ENCODE measurements at regions of chr11 and their contacts with region 1.

Region 1: DNA sequence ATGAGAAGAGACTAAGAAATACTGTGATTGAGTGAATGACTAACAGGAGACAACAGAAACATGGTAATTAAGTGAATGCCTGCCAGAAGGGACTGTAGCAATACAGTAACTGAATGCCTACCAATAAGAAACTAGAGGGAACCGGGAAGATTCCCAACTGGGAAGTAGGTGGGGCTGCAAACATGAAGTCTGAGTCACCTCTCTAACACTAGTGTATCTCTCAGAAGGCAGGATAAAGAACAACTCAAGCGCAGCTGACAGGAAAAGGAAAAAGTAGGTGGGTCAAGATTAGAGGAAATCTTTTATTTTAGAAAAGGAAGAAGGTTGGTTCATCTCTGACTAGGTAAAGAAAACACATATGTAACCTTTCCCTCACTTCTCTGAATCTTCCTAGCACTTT is 14.0 kb downstream of the C11orf42 start:
- DNase-seq: peak; percentile 95
- H3K4me3 Mint-ChIP-seq: no peak overlapping the region
- H3K27ac Mint-ChIP-seq: peak overlapping the region; percentile 57
- H3K4me1 Mint-ChIP-seq: peaks cover 13% of the 10 kb centered on the region
- H3K27me3 Mint-ChIP-seq: no peaks in the 10 kb centered on the region
- CTCF ChIP-seq: no peak

Region 2: GRCh38 chr11:6234387-6235107 is 15.2 kb after region 1 on chr11 and contains the start of gene FHIP1B:
- CTCF ChIA-PET with region 1: interaction called, 6 read pairs
- POLR2A ChIA-PET with region 1: interaction called, 40 read pairs
- intact Hi-C with region 1: loop called (anchors 2 kb)
- DNase-seq: peak; percentile 100
- H3K4me3 Mint-ChIP-seq: peak within 1 kb of the TSS; percentile 94
- H3K27ac Mint-ChIP-seq: peak within 1 kb of the TSS; percentile 93
- H3K4me1 Mint-ChIP-seq: peaks cover 26% of the 10 kb centered on the region
- H3K27me3 Mint-ChIP-seq: no peaks in the 10 kb centered on the region
- CTCF ChIP-seq: no peak
- total RNA-seq, gene FHIP1B: 44.6 and 51.1 TPM in 2 replicates